Mammary epithelial cell (primary cell): ENCODE measurements at regions of chr1 and their contacts with region 1.

Region 1: GRCh38 chr1:153277817-153278216 is 18.3 kb downstream of the LORICRIN start:
- DNase-seq: peak; percentile 71
- H3K4me3 ChIP-seq: no peak overlapping the region
- H3K27ac ChIP-seq: no peak overlapping the region
- H3K4me1 ChIP-seq: no peaks in the 10 kb centered on the region
- H3K27me3 ChIP-seq: no peaks in the 10 kb centered on the region
- CTCF ChIP-seq: peak; percentile 92 to 98

Region 2: DNA sequence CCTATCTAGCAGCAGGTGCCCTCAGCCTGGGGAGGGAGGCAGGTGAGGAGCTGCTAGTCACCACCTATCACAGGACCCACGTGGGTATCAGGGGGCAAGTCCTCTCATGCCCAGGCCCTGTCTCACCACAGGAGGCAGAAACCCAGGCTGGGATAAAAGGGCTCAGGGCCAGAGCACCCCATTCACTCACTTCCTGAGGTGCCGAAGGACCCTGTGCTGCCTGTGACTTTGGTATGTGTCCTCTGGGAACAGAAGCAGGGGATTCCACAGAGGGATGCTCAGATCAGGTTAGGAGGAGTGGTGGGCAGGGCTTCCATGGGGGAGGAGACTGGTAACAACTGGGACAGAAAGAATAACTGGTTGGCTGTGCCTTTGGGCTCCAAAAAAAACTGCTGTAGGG is 491.7 kb before region 1 on chr1 and contains the start of gene LCE1E:
- CTCF ChIA-PET with region 1: no interaction called
- dilution Hi-C with region 1: no loop called
- in situ Hi-C with region 1: no loop called
- intact Hi-C with region 1: no loop called
- DNase-seq: peak; percentile 89
- H3K4me3 ChIP-seq: peak within 1 kb of the TSS in 2 of 3 experiments; percentile 23 to 41
- H3K27ac ChIP-seq: peak within 1 kb of the TSS; percentile 33
- H3K4me1 ChIP-seq: peaks cover 17% of the 10 kb centered on the region
- H3K27me3 ChIP-seq: no peaks in the 10 kb centered on the region
- CTCF ChIP-seq: peak in 1 of 2 donors; percentile 31
- total RNA-seq, gene LCE1E: 2.9 TPM in 1 of 2 donors, not detected in the other

Region 3: DNA sequence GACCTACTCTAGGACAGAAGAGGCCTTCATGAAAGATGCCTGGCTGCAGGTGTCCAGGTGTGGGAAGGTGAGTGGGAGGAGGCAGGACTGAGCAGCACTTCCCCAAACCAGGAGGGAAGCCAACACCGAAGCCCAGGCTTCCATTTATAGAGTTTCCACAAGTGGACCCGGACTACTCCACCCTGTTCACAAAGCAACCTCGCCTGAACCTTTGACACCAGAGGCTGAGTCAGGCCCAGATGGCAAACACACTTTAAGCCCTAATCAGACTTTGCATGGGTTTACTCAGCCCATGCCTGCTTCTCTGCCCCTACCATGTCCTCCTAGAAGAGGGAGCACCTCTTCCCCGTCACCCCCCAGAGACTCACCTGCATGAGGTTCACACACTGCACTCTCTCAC is 46.5 kb before region 1 on chr1:
- CTCF ChIA-PET with region 1: interaction called, 3 read pairs
- dilution Hi-C with region 1: no loop called
- in situ Hi-C with region 1: no loop called
- intact Hi-C with region 1: loop called (anchors 2 kb)
- DNase-seq: peak; percentile 18
- H3K4me3 ChIP-seq: no peak overlapping the region
- H3K27ac ChIP-seq: no peak overlapping the region
- H3K4me1 ChIP-seq: no peaks in the 10 kb centered on the region
- H3K27me3 ChIP-seq: no peaks in the 10 kb centered on the region
- CTCF ChIP-seq: no peak

Region 4: GRCh38 chr1:153238536-153238935 is 39.3 kb before region 1 on chr1:
- CTCF ChIA-PET with region 1: no interaction called
- dilution Hi-C with region 1: no loop called
- in situ Hi-C with region 1: no loop called
- intact Hi-C with region 1: loop called (anchors 1 kb)
- DNase-seq: no peak
- H3K4me3 ChIP-seq: no peak overlapping the region
- H3K27ac ChIP-seq: no peak overlapping the region
- H3K4me1 ChIP-seq: no peaks in the 10 kb centered on the region
- H3K27me3 ChIP-seq: no peaks in the 10 kb centered on the region
- CTCF ChIP-seq: peak; percentile 23 to 49

Region 5: DNA sequence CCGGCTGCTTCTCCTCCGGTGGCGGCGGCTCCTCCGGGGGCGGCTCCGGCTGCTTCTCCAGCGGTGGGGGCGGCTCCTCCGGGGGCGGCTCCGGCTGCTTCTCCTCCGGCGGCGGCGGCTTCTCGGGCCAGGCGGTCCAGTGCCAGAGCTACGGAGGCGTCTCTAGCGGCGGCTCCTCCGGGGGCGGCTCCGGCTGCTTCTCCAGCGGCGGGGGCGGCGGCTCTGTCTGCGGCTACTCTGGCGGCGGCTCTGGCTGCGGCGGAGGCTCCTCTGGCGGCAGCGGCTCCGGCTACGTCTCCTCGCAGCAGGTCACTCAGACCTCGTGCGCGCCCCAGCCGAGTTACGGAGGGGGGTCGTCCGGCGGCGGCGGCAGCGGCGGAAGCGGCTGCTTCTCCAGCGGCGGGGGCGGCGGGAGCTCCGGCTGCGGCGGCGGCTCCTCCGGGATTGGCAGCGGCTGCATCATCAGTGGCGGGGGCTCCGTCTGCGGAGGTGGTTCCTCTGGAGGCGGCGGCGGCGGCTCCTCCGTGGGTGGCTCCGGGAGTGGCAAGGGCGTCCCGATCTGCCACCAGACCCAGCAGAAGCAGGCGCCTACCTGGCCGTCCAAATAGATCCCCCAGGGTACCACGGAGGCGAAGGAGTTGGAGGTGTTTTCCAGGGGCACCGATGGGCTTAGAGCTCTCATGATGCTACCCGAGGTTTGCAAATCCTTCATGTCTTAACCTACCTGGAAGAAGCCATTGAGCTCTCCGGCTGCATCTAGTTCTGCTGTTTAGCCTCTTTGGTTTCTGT is 16.3 kb before region 1 on chr1:
- CTCF ChIA-PET with region 1: interaction called, 28 read pairs
- dilution Hi-C with region 1: no loop called
- in situ Hi-C with region 1: no loop called
- intact Hi-C with region 1: no loop called
- DNase-seq: no peak
- H3K4me3 ChIP-seq: peak overlapping the region; percentile 36 to 49 (median 46)
- H3K27ac ChIP-seq: no peak overlapping the region
- H3K4me1 ChIP-seq: peaks cover 9% of the 10 kb centered on the region
- H3K27me3 ChIP-seq: peaks cover 27% of the 10 kb centered on the region
- CTCF ChIP-seq: no peak

Region 6: DNA sequence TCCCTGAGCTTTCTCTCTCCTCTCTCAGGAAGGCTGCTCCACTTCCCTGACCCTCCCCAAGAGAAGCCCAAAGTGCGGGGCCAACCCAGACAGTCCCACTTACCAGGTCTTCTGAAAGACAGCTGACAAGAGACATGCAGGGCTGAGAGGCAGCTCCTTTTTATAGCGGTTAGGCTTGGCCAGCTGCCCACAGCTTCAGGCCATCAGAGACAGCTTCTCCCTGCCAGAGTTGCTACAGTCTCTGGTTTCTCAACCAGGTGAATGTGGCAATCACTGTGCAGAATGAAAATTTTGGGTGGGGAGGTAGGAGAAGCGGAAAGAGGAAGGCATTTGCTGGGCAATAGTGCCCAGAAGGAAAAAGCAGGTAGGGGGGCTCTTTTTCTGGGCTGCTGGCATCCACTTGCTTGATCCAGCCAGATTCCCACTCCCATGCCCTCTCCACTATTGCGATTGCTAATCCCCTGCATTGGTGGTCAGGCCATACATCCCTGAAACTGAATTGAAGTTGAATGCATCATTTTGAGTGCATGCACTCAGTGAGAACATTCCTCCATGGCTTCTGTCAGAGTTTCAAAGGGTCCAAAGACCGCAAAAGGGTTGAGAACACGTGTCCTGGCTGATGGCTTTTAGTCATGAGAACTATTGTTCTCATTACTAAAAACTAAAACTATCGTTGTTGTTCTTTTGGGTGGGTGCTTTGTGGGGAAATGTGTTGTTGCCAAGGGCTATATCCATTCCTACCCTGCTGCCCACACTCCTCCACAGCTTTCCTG is 113.3 kb after region 1 on chr1 and contains the start of gene S100A8:
- CTCF ChIA-PET with region 1: no interaction called
- dilution Hi-C with region 1: no loop called
- in situ Hi-C with region 1: no loop called
- intact Hi-C with region 1: no loop called
- DNase-seq: peak; percentile 89
- H3K4me3 ChIP-seq: no peak within 1 kb of the TSS
- H3K27ac ChIP-seq: no peak within 1 kb of the TSS
- H3K4me1 ChIP-seq: peaks cover 50% of the 10 kb centered on the region
- H3K27me3 ChIP-seq: no peaks in the 10 kb centered on the region
- CTCF ChIP-seq: no peak
- total RNA-seq, gene S100A8: 4.0 to 363 TPM

Region 7: DNA sequence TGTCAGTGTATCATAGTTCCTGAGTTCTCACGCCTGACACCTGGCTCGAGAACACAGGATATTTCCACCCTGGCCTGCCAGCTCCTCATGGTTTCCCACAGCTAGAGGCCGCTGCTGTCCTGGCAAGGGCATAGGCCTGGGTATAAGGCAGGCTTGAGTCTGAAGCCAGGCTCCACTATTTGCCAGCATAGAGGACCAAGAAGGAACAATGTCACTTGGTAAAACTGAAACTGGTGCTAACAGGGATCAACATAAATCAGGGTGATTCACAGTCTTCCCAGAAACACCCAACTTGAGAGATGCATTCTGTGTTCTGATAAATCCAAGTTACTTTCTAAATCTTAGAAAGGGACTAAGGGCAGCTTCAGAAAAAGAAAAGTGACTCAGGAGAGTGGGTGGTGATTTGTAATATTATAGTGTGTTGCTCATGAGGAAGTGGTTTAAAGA is 294.8 kb after region 1 on chr1:
- CTCF ChIA-PET with region 1: no interaction called
- dilution Hi-C with region 1: no loop called
- in situ Hi-C with region 1: no loop called
- intact Hi-C with region 1: no loop called
- DNase-seq: peak; percentile 89
- H3K4me3 ChIP-seq: no peak overlapping the region
- H3K27ac ChIP-seq: peak overlapping the region; percentile 78
- H3K4me1 ChIP-seq: peaks cover 39% of the 10 kb centered on the region
- H3K27me3 ChIP-seq: no peaks in the 10 kb centered on the region
- CTCF ChIP-seq: peak; percentile 92 to 99